MCF 10A (cell line): ENCODE measurements at regions of chr21 and their contacts with region 1.

Region 1: GRCh38 chr21:31866077-31866511 is 6.7 kb upstream of the HUNK start:
- DNase-seq: peak; percentile 81
- H3K4me3 Mint-ChIP-seq: no peak overlapping the region
- H3K27ac Mint-ChIP-seq: no peak overlapping the region
- H3K4me1 Mint-ChIP-seq: no peaks in the 10 kb centered on the region
- H3K27me3 Mint-ChIP-seq: peaks cover 16% of the 10 kb centered on the region
- CTCF ChIP-seq: peak; percentile 81

Region 2: GRCh38 chr21:31781737-31782136 is 84.4 kb before region 1 on chr21:
- CTCF ChIA-PET with region 1: interaction called, 11 read pairs
- POLR2A ChIA-PET with region 1: no interaction called
- intact Hi-C with region 1: loop called (anchors 1 kb)
- DNase-seq: peak; percentile 74
- H3K4me3 Mint-ChIP-seq: no peak overlapping the region
- H3K27ac Mint-ChIP-seq: no peak overlapping the region
- H3K4me1 Mint-ChIP-seq: peaks cover 16% of the 10 kb centered on the region
- H3K27me3 Mint-ChIP-seq: no peaks in the 10 kb centered on the region
- CTCF ChIP-seq: no peak

Region 3: DNA sequence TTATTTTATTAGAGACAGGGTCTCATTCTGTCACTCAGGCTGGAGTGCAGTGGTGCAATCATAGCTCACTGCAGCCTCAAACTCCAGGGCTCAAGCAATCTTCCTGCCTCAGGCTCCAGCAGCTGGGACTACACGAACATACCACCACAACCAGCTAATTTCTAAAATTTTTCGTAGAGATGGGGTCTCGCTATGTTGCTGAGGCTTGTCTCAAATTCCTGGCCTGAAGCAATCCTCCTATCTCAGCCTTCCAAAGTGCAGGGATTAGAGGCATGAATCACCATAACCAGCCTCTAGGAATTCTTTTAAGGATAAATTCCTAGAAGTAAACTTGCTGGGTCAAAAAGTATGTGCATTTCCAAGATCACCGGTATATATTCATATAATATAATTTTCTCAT is 10.9 kb before region 1 on chr21:
- CTCF ChIA-PET with region 1: interaction called, 10 read pairs
- POLR2A ChIA-PET with region 1: no interaction called
- intact Hi-C with region 1: no loop called
- DNase-seq: no peak
- H3K4me3 Mint-ChIP-seq: no peak overlapping the region
- H3K27ac Mint-ChIP-seq: no peak overlapping the region
- H3K4me1 Mint-ChIP-seq: no peaks in the 10 kb centered on the region
- H3K27me3 Mint-ChIP-seq: peaks cover 3% of the 10 kb centered on the region
- CTCF ChIP-seq: no peak

Region 4: DNA sequence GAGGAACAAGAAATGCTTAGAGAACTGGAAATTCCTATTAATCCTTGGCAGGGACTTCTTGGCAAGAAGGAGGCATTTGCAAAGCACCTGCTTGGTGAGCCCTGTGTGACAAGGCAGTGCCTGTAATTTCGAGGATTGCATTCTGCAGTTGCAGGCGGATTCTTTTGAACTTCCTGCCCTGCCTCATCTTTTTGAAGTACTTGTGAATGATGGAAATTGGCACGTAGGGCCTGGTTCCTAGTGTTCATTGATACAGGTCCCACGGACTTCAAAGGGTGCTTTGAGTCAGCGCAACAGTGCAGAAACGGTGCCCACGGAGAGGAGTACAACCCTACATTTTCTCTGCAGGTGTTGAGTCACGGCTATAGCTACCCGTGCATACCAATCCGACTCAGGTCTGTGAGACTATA is 13.2 kb after region 1 on chr21:
- CTCF ChIA-PET with region 1: interaction called, 10 read pairs
- POLR2A ChIA-PET with region 1: no interaction called
- intact Hi-C with region 1: no loop called
- DNase-seq: no peak
- H3K4me3 Mint-ChIP-seq: no peak overlapping the region
- H3K27ac Mint-ChIP-seq: no peak overlapping the region
- H3K4me1 Mint-ChIP-seq: no peaks in the 10 kb centered on the region
- H3K27me3 Mint-ChIP-seq: peaks cover 69% of the 10 kb centered on the region
- CTCF ChIP-seq: no peak

Region 5: DNA sequence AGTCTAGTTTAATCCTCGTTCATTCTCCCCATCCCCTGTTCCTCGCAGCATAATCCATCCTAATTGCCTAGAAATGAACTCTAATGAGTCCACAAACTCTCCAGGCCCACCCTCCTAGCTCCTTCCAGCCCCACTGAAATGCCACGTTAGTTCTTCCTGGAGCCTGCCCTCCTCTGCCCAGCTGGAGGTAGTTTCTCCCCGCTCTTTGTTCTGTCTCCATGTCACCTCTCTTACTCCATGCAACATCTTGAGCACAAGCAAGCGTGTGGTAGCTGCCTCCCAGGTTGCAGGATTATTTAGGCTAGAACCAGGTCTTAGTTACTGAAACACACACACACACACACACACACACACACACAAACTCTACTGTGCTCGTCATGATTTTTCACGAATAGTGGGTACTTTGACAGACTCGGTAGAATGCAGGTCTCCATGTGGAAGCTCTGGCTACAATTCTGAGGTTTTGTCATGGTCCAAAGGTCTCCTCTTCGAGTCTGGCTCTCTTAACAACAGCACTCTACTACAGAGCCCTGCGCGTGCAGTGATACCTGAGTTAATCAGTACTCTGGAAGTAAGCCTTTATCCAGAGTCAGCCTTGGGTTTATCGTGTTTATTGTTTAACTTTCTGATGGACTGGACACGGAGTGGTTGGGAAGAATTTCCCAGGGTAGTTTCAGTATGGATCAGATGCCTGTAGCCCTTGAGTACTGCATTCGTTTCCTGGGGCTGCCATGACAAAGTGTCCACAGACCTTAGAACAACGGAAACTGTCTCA is 34.2 kb after region 1 on chr21:
- CTCF ChIA-PET with region 1: interaction called, 10 read pairs
- POLR2A ChIA-PET with region 1: no interaction called
- intact Hi-C with region 1: no loop called
- DNase-seq: no peak
- H3K4me3 Mint-ChIP-seq: no peak overlapping the region
- H3K27ac Mint-ChIP-seq: no peak overlapping the region
- H3K4me1 Mint-ChIP-seq: no peaks in the 10 kb centered on the region
- H3K27me3 Mint-ChIP-seq: peaks cover 10% of the 10 kb centered on the region
- CTCF ChIP-seq: no peak

Region 6: DNA sequence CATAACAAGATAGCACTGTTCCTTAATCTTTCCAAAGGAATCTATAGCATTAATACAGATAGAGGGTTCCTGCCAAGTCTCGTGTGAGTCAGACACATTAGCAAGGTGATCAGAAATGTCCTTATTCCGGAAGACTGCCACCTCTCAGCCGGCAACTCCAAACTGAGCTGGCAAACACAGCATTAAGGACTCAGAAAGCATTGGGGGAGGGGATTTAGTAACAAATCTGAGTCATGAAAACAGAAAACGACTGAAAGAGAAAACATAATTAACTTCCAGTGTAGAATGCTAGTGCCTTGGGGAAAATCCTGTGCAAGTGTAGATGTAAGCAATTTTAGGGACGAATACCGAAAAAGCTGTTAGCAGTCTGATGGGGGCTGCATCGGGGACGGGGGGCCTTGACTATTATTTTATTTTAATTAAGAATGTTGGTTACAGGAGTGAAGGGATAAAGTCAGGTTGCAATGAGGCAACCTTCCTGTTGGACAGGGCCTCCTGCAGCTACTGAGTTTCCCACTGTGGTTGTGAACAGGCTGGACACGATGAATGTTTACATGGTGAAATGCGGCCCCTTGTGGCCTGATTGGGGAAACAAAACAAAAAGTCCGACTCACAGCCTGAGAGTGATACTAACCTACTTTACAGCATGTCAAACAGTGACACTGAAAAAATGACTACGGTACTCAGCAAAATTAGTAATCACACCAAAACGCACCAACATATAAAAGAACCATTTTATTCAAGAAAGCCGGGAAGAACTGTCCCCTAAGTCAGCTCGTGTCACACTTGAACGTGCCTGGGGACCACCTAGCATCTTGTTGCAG is 392.1 kb after region 1 on chr21:
- CTCF ChIA-PET with region 1: interaction called, 84 read pairs
- POLR2A ChIA-PET with region 1: interaction called, 3 read pairs
- intact Hi-C with region 1: loop called (anchors 1 kb)
- DNase-seq: peak; percentile 87
- H3K4me3 Mint-ChIP-seq: peak overlapping the region; percentile 19
- H3K27ac Mint-ChIP-seq: no peak overlapping the region
- H3K4me1 Mint-ChIP-seq: peaks cover 23% of the 10 kb centered on the region
- H3K27me3 Mint-ChIP-seq: peaks cover 11% of the 10 kb centered on the region
- CTCF ChIP-seq: peak; percentile 76